ENCODE measurements at regions of chr15 and their contacts with region 1.

Region 1: DNA sequence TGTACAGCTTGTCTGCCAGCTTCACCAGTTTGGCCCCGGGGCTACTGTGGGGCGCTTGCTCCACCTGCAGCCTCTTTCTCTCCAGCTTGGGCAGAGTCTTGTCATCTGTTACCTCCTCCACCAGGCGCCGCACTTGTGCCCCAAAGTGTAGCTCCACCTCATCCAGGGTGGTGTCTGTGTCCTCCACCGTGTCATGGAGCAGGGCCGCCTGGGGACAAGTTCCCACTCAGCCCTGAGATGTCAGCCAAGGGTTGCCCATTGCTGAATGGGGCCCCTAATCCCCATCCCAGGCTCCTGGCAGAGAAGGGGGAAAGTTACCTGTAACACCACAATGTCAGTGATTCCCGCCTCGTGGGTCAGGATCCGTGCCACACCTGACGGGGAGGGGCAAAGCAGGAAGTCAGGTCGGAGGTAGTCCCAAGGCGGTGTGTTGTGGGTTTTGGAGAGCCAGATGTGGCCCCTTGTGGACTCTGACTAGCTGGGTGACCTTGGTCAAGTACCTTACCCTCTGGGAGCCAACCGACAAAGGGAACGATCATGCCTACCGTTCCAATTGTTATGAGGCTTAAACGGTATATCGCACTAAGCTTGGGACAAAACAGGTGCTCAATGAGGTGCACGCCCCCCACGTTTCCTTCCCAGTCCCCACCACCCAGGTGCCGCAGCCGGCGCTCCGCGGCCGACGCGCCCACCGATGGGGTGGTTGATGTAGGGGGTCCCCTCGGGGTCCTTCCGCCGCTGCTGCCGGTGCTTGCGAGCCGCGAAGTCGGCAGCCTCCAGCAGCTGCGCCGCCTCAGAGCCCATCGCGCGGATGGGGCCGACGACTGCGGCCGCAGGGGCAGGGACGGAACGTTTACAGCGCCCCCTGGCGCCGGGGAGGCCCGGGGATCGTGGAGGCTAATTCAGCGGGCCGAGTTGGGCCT is at the start of gene HDDC3:
- DNase-seq: peak; percentile 93
- H3K4me3 Mint-ChIP-seq: peak within 1 kb of the TSS; percentile 99
- H3K27ac Mint-ChIP-seq: peak within 1 kb of the TSS; percentile 100
- H3K4me1 Mint-ChIP-seq: peaks cover 47% of the 10 kb centered on the region
- H3K27me3 Mint-ChIP-seq: no peaks in the 10 kb centered on the region
- total RNA-seq, gene HDDC3: 45.0 to 45.8 TPM

Region 2: DNA sequence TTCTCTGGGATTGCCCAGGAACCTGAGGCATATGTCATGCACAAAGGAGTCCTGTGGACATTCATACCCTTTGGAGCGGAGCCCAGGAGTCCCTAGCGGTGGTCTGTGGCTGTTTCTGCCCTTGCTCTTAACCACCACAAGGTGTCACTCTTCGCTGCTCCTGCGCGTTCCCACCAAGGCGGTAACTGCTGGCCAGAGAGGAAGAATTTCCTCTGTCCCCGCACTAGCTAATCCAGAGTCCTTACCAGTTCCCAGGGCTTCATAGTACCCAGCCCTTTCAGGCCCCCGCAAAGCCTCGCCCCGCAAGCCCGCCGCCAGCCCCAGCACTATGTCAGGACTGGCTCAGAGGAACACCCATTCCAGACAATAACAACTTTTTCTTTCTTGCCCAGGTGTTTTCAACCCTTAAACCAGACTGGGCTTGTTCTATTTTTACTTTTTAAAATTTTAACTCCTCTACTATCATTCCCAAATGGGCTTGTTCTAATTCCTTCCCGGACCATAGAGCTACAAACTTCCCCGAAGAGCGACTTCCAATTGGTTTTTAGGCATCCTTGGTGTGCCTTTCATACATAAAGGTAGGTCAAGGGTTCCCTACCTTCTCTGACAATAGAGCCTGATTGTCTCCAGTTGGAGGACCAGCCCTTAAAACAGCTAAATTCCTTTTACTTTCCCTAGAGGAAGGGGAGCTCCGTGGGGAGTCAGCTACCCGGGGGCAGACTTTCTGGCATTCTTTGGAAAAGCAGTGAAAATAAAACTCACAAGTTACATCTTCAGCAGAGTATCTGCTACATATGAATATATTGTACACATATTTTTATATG is 611.7 kb before region 1 on chr15:
- CTCF ChIA-PET with region 1: interaction called, 13 read pairs
- POLR2A ChIA-PET with region 1: no interaction called
- intact Hi-C with region 1: no loop called
- DNase-seq: peak; percentile 79
- H3K4me3 Mint-ChIP-seq: no peak overlapping the region
- H3K27ac Mint-ChIP-seq: no peak overlapping the region
- H3K4me1 Mint-ChIP-seq: peaks cover 3% of the 10 kb centered on the region
- H3K27me3 Mint-ChIP-seq: no peaks in the 10 kb centered on the region

Region 3: GRCh38 chr15:90660195-90660998 is 271.6 kb before region 1 on chr15:
- CTCF ChIA-PET with region 1: interaction called, 9 read pairs
- POLR2A ChIA-PET with region 1: no interaction called
- intact Hi-C with region 1: loop called (anchors 5 kb)
- DNase-seq: peak; percentile 88
- H3K4me3 Mint-ChIP-seq: peak overlapping the region; percentile 47
- H3K27ac Mint-ChIP-seq: peak overlapping the region; percentile 16
- H3K4me1 Mint-ChIP-seq: peaks cover 63% of the 10 kb centered on the region
- H3K27me3 Mint-ChIP-seq: peaks cover 54% of the 10 kb centered on the region

Region 4: DNA sequence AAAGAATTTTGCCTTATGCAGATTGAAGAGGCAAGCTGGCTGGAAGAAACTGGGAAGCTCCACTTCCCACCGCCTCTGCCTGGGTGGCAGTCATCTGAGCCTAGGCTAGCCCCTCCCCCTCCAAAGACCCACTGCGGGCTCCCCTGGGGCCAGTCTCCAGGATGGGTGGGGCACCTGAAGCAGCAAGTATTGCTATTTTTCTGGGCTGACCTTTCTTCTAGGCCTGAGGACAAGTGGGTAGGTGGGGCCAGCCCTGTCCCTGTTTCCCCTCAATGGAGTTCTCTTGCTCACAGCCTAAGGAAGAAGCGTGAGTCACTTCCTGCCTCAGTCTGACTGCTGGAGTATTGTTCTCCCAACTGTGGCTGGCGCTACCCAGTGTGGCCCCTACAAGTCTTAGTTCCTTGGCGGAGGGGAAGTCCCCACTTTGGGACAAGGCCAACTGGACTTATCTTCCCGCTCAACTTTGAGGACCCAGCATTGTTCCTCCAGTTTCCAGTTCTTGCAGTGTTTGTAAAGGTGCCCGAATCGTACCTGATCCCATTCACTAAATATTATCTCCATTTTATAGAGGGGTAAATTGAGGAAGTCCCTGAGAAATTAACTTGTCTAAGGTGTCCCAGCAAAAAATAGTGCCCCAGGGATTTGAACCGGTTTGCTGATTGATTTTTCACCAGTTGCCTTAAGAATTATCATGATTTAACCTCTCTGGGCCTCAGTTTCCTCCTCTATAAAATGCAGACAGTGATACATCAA is 62.2 kb before region 1 on chr15:
- CTCF ChIA-PET with region 1: interaction called, 3 read pairs
- POLR2A ChIA-PET with region 1: interaction called, 9 read pairs
- intact Hi-C with region 1: loop called (anchors 2 kb)
- DNase-seq: peak; percentile 81
- H3K4me3 Mint-ChIP-seq: peak overlapping the region; percentile 91
- H3K27ac Mint-ChIP-seq: peak overlapping the region; percentile 97
- H3K4me1 Mint-ChIP-seq: peaks cover 56% of the 10 kb centered on the region
- H3K27me3 Mint-ChIP-seq: no peaks in the 10 kb centered on the region

Region 5: DNA sequence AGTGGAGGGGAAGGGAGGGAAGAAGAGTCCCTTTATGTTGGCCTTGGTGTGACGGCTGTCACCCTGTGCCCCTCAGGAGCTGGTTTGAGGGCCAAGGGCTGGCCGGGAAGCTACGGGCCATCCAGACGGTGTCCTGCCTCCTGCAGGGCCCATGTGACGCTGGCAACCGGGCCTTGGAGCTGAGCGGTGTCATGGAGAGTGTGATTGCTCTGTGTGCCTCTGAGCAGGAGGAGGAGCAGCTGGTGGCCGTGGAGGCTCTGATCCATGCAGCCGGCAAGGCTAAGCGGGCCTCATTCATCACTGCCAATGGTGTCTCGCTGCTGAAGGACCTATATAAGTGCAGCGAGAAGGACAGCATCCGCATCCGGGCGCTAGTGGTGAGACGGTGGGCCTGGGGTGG is 14.5 kb after region 1 on chr15:
- CTCF ChIA-PET with region 1: interaction called, 106 read pairs
- POLR2A ChIA-PET with region 1: interaction called, 3 read pairs
- intact Hi-C with region 1: no loop called
- DNase-seq: no peak
- H3K4me3 Mint-ChIP-seq: no peak overlapping the region
- H3K27ac Mint-ChIP-seq: no peak overlapping the region
- H3K4me1 Mint-ChIP-seq: no peaks in the 10 kb centered on the region
- H3K27me3 Mint-ChIP-seq: no peaks in the 10 kb centered on the region

Region 6: GRCh38 chr15:91032919-91033803 is 101.2 kb after region 1 on chr15:
- CTCF ChIA-PET with region 1: interaction called, 14 read pairs
- POLR2A ChIA-PET with region 1: no interaction called
- intact Hi-C with region 1: no loop called
- DNase-seq: peak; percentile 77
- H3K4me3 Mint-ChIP-seq: no peak overlapping the region
- H3K27ac Mint-ChIP-seq: no peak overlapping the region
- H3K4me1 Mint-ChIP-seq: peaks cover 4% of the 10 kb centered on the region
- H3K27me3 Mint-ChIP-seq: no peaks in the 10 kb centered on the region

Region 7: DNA sequence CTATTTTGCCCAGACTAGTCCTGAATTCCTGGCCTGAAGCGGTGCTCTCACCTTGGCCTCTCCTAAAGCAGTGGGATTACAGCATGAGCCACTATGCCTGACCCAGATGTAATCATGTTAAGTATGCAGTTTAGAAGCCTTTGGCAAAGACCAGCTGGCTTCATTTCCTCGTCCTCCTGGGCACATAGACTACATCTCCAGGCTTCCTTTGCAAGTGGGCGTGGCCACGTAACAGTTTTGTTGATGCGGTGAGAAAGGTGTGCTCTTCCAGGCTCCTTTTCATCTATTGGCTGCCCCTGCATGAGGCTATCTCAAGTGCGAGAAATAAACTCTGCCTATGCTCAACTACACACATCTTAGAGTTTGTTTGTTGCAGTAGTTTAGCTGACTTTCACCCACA is 181.0 kb after region 1 on chr15:
- CTCF ChIA-PET with region 1: no interaction called
- POLR2A ChIA-PET with region 1: no interaction called
- intact Hi-C with region 1: no loop called
- DNase-seq: no peak
- H3K4me3 Mint-ChIP-seq: no peak overlapping the region
- H3K27ac Mint-ChIP-seq: no peak overlapping the region
- H3K4me1 Mint-ChIP-seq: peaks cover 2% of the 10 kb centered on the region
- H3K27me3 Mint-ChIP-seq: peaks cover 17% of the 10 kb centered on the region